ENCODE measurements at regions of chr9 and their contacts with region 1.

Region 1: DNA sequence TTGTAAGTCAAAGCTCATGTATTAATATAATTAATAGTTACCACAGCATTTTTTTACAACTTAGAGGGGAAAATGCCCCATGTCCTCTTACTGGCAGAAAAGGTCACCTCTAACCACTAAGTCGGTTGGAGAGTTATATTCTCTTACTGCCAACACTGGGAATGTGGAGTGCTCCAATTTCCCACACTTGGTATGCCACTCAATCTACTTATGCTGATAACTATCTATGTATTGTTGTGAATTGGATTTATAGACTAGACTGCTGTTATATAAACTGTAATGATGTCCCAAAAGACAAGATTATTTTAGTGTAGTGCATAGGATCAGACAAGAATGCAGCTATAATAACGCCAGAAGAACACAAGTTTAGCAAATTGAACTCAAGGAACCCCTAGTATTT is 2385.2 kb upstream of the C9orf72 start:
- DNase-seq: no peak
- ATAC-seq: no peak
- H3K4me3 ChIP-seq: no peak overlapping the region
- H3K27ac ChIP-seq: no peak overlapping the region
- H3K4me1 ChIP-seq: no peaks in the 10 kb centered on the region
- H3K27me3 ChIP-seq: no peaks in the 10 kb centered on the region
- CTCF ChIP-seq: no peak

Region 2: GRCh38 chr9:29882767-29883166 is 75.7 kb before region 1 on chr9:
- CTCF ChIA-PET with region 1: no interaction called
- POLR2A ChIA-PET with region 1: no interaction called
- intact Hi-C with region 1: no loop called
- DNase-seq: no peak
- ATAC-seq: no peak
- H3K4me3 ChIP-seq: no peak overlapping the region
- H3K27ac ChIP-seq: no peak overlapping the region
- H3K4me1 ChIP-seq: no peaks in the 10 kb centered on the region
- H3K27me3 ChIP-seq: no peaks in the 10 kb centered on the region
- CTCF ChIP-seq: no peak

Region 3: DNA sequence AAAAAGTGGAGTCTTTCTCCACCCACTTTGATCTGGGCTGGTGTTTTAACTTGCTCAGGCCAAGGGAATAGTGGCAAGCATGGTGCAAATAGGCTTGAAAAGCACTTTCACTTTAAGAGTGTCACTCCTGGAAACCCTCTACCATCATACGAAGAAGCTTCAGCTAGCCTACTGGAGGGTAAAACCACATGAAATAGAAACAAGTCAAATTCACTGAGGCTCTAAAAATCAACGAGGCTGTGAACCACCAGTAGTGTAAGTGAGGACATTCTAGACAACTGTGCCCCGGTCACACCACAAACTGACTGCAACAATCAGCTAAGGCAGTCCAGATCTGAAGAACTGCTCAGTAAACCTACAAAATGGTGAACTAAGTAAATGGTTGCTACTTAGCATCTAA is 18.9 kb before region 1 on chr9:
- CTCF ChIA-PET with region 1: no interaction called
- POLR2A ChIA-PET with region 1: interaction called, 19 read pairs
- intact Hi-C with region 1: no loop called
- DNase-seq: no peak
- ATAC-seq: no peak
- H3K4me3 ChIP-seq: no peak overlapping the region
- H3K27ac ChIP-seq: no peak overlapping the region
- H3K4me1 ChIP-seq: no peaks in the 10 kb centered on the region
- H3K27me3 ChIP-seq: no peaks in the 10 kb centered on the region
- CTCF ChIP-seq: no peak

Measured in PC-3 (cell line).